ENCODE measurements at regions of chr3 and their contacts with region 1.

Region 1: DNA sequence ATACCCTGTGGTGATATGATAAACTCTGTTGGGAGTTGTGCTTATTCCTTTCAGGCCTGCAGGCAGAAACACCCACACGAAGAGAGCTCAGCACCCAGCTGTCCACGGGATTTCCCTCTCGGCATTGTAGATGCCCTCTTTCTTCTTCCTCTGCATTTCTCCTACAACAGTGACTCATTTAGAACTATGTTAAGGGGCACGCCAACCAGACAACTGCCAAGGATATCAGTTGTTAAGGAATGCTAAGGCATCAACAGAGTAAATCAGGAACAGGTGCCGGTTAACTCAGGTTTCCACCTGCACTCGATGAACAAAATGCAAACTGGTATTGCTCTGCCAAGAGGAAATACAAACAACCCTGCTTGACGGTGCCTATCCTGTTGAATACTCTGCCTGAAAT is 270.0 kb upstream of the PEX5L start:
- DNase-seq: no peak
- ATAC-seq: no peak
- H3K4me3 ChIP-seq: no peak overlapping the region
- H3K27ac ChIP-seq: no peak overlapping the region
- H3K4me1 ChIP-seq: no peaks in the 10 kb centered on the region
- H3K27me3 ChIP-seq: no peaks in the 10 kb centered on the region

Region 2: DNA sequence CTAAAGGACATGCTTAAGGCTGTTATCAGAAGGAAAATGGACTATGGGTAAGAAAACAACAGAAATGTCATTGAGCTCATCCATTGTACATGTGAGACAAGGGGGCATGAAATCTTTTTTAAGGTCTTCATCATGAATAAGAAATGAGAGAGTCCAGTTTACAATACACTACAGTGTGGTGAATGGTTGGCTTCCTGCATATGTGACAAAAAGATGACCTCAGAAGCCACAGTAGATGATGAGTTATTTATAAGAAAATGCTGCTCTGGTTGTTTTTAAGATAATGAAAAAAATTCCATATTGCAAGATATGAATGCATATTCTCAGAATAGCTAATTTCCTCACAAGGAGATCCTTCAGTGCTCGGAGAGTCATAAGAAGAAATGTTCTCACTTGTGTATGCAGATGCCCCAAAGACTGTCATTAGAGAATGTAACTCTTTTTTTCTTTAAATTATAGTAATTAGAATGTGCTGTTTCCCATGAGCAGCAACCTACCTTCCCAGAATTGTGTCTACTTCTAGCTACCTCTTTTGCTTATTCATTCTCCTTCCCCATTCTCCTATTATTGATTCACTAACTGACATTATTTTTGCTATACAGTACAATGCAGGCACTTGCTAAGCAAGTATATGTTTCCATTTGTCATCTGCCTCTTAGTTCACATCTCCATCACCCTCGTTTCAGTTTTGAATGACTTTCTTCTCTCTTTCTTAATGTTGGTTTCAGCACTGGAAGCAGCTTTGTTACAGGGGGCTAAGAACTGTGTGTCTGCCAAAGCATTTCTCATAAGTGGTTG is 118.0 kb before region 1 on chr3:
- intact Hi-C with region 1: loop called in 1 of 4 experiments (anchors 5 kb)
- DNase-seq: no peak
- ATAC-seq: no peak
- H3K4me3 ChIP-seq: no peak overlapping the region
- H3K27ac ChIP-seq: no peak overlapping the region
- H3K4me1 ChIP-seq: no peaks in the 10 kb centered on the region
- H3K27me3 ChIP-seq: no peaks in the 10 kb centered on the region